HCT116 (cell line): ENCODE measurements at regions of chr10 and their contacts with region 1.

Region 1: GRCh38 chr10:74213571-74214162 is 62.6 kb downstream of the ADK start:
- DNase-seq: peak; percentile 35
- ATAC-seq: peak; percentile 72
- H3K4me3 ChIP-seq: no peak overlapping the region
- H3K27ac ChIP-seq: no peak overlapping the region
- H3K4me1 ChIP-seq: no peaks in the 10 kb centered on the region; a peak in 1 of 4 replicates
- H3K27me3 ChIP-seq: no peaks in the 10 kb centered on the region
- CTCF ChIP-seq: peak; percentile 69 to 71 (median 69); a peak in 5 of 6 replicates
- POLR2A ChIP-seq: no peak
- RAD21 ChIP-seq: peak; percentile 76

Region 2: GRCh38 chr10:74151056-74151878 is 62.4 kb before region 1 on chr10 and contains the start of gene ADK:
- CTCF ChIA-PET with region 1: no interaction called
- POLR2A ChIA-PET with region 1: no interaction called
- RAD21 ChIA-PET with region 1: interaction called in 1 of 2 experiments, 3 read pairs
- intact Hi-C with region 1: loop called (anchors 5 kb)
- DNase-seq: peak; percentile 96
- ATAC-seq: peak; percentile 92
- H3K4me3 ChIP-seq: peak within 1 kb of the TSS; percentile 82 to 85
- H3K27ac ChIP-seq: peak within 1 kb of the TSS; percentile 89
- H3K4me1 ChIP-seq: peaks cover 13 to 22% of the 10 kb centered on the region in 2 experiments
- H3K27me3 ChIP-seq: no peaks in the 10 kb centered on the region
- CTCF ChIP-seq: peak in 2 of 3 experiments; percentile 15 to 16; a peak in 1 of 6 replicates
- POLR2A ChIP-seq: peak; percentile 40
- RAD21 ChIP-seq: peak; percentile 17; the same call in 1 of the 2 replicates
- total RNA-seq, gene ADK: 55.0 TPM

Region 3: DNA sequence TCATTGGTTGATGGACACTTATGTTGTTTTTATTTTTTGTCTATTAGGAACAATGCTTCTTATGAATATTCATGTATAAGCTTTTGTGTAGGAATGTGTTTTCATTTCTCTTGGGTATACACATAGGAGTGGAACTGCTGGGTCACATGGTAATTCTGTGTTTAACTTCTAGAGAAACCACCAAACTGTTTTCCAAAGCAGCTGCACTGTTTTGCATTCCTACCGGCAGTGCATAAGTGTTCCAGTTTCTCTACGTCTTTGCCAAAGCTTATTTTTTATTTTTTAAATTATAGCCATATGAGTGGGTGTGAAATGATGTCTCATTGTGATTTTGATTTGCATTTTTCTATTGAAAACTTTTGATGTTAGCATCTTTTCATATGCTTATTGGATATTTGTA is 11.3 kb before region 1 on chr10:
- CTCF ChIA-PET with region 1: no interaction called
- POLR2A ChIA-PET with region 1: no interaction called
- RAD21 ChIA-PET with region 1: no interaction called
- intact Hi-C with region 1: no loop called
- DNase-seq: no peak
- ATAC-seq: no peak
- H3K4me3 ChIP-seq: no peak overlapping the region
- H3K27ac ChIP-seq: no peak overlapping the region
- H3K4me1 ChIP-seq: peaks cover 0 to 16% of the 10 kb centered on the region in 2 experiments; a peak in 2 of 4 replicates
- H3K27me3 ChIP-seq: no peaks in the 10 kb centered on the region
- CTCF ChIP-seq: no peak
- POLR2A ChIP-seq: no peak
- RAD21 ChIP-seq: no peak